ENCODE measurements at regions of chr1 and their contacts with region 1.

Region 1: GRCh38 chr1:234722904-234723720 is 113.1 kb upstream of the IRF2BP2 start:
- DNase-seq: peak; percentile 44 to 94 (median 76)

Region 2: DNA sequence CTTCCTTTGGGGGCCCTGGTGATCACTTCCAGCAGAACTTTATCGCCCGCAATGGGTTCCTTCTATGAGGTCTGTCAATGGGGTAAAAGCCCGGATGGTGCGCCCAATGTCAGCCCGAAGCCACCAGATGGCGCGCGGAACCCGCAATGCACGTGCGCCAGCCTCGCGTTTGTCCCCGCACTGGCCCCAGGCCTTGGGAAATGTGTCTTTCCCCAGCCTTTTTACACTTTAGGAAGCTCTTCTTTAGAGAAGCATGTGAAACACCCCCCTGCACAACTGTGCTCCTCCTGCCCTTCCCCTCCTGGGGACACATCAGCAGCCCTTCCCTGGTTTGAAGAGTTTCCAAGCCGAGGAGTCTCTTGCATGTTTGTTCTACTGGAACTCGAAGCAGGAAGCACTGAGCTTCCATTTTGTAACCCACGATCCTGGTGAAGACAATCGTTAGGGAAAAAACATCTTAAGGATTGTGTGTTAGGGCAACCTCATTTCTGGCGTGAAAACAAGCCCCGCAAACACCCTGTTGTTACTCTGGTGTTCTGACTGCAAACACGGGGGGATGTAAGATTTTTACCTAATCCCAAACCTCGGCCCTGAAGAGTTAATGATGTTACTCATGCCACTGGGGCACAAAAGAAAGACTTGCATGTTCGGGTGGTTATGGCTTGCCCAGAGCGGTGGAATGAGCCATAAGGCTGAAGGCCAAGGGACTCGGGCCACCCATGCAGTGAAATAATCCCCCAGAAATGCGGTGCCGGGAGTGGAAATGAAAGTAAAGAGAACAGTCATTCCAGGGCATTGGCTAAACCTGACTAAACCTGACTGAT is 223.8 kb before region 1 on chr1:
- intact Hi-C with region 1: loop called (anchors 5 kb)
- DNase-seq: peak; percentile 88 to 98 (median 95)

Region 3: GRCh38 chr1:234610348-234611152 is 112.6 kb before region 1 on chr1:
- intact Hi-C with region 1: loop called (anchors 1 kb)
- DNase-seq: peak; percentile 89 to 98 (median 95)

Region 4: GRCh38 chr1:234755449-234755863 is 32.3 kb after region 1 on chr1:
- intact Hi-C with region 1: no loop called
- DNase-seq: peak; percentile 60 to 96 (median 88)

Region 5: GRCh38 chr1:234970731-234971476 is 247.8 kb after region 1 on chr1:
- intact Hi-C with region 1: loop called (anchors 2 kb)
- DNase-seq: peak in 41 of 42 donors; percentile 22 to 86 (median 68)

Region 6: GRCh38 chr1:235087896-235088295 is 364.8 kb after region 1 on chr1:
- intact Hi-C with region 1: loop called (anchors 5 kb)
- DNase-seq: peak in 1 of 42 donors; percentile 4